ENCODE measurements at regions of chr14 and their contacts with region 1.

Region 1: GRCh38 chr14:105351920-105352851 is 37.6 kb downstream of the PACS2 start:
- DNase-seq: peak; percentile 89
- H3K4me3 ChIP-seq: no peak overlapping the region
- H3K27ac ChIP-seq: no peak overlapping the region
- H3K4me1 ChIP-seq: peaks cover 2% of the 10 kb centered on the region
- H3K27me3 ChIP-seq: no peaks in the 10 kb centered on the region
- CTCF ChIP-seq: peak; percentile 76 to 85
- POLR2A ChIP-seq: no peak

Region 2: GRCh38 chr14:105197271-105197670 is 154.9 kb before region 1 on chr14:
- CTCF ChIA-PET with region 1: interaction called, 15 read pairs
- POLR2A ChIA-PET with region 1: no interaction called
- dilution Hi-C with region 1: no loop called
- intact Hi-C with region 1: no loop called
- DNase-seq: no peak
- H3K4me3 ChIP-seq: no peak overlapping the region
- H3K27ac ChIP-seq: peak overlapping the region; percentile 87
- H3K4me1 ChIP-seq: peaks cover 72% of the 10 kb centered on the region
- H3K27me3 ChIP-seq: no peaks in the 10 kb centered on the region
- CTCF ChIP-seq: no peak
- POLR2A ChIP-seq: no peak

Region 3: DNA sequence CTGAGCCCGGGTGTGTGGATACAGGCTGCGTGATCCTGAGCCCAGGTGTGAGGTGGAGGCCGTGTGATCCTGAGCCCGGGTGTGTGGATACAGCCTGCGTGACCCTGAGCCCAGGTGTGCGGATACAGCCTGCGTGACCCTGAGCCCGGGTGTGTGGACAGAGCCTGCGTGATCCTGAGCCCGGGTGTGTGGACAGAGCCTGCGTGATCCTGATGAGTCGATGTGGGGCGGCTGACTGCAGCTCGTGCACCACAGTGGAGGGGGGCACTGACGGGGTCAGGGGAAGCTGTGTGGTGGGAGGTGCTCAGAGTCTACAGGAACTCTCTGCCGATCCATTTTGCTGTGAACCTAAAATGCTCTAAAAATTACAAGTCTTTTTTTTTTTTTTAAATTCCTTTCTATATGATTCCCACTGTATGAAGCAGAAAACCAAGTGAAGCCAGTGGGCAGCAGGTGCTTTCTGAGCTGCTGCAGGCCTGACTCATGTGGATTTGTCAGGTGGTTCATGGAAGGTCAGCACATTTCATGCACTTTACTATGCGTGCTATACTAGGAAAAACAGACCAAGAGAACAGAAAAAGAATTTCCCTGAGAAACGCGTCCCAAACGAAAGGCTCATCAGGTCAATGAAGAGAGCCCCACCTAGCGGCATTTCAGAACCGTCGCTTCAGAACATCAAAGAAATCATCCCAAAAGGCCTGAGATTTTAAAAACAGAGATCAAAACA is 70.7 kb before region 1 on chr14:
- CTCF ChIA-PET with region 1: interaction called, 6 read pairs
- POLR2A ChIA-PET with region 1: no interaction called
- dilution Hi-C with region 1: no loop called
- intact Hi-C with region 1: loop called (anchors 1 kb)
- DNase-seq: peak; percentile 61
- H3K4me3 ChIP-seq: no peak overlapping the region
- H3K27ac ChIP-seq: no peak overlapping the region
- H3K4me1 ChIP-seq: peaks cover 11% of the 10 kb centered on the region
- H3K27me3 ChIP-seq: no peaks in the 10 kb centered on the region
- CTCF ChIP-seq: peak; percentile 63 to 67
- POLR2A ChIP-seq: no peak

Region 4: GRCh38 chr14:105300792-105301533 is 51.2 kb before region 1 on chr14 and contains the start of gene BRF1:
- CTCF ChIA-PET with region 1: interaction called, 22 read pairs
- POLR2A ChIA-PET with region 1: no interaction called
- dilution Hi-C with region 1: no loop called
- intact Hi-C with region 1: loop called (anchors 2 kb)
- DNase-seq: peak; percentile 95
- H3K4me3 ChIP-seq: peak within 1 kb of the TSS; percentile 25 to 79 (median 54)
- H3K27ac ChIP-seq: peak within 1 kb of the TSS; percentile 62
- H3K4me1 ChIP-seq: peaks cover 9% of the 10 kb centered on the region
- H3K27me3 ChIP-seq: no peaks in the 10 kb centered on the region
- CTCF ChIP-seq: no peak
- POLR2A ChIP-seq: peak; percentile 39
- total RNA-seq, gene BRF1: 37.9 and 47.2 TPM in 2 replicates

Region 5: GRCh38 chr14:105340821-105341733 is 11.1 kb before region 1 on chr14:
- CTCF ChIA-PET with region 1: interaction called, 19 read pairs
- POLR2A ChIA-PET with region 1: no interaction called
- dilution Hi-C with region 1: no loop called
- intact Hi-C with region 1: no loop called
- DNase-seq: peak; percentile 41
- H3K4me3 ChIP-seq: no peak overlapping the region
- H3K27ac ChIP-seq: no peak overlapping the region
- H3K4me1 ChIP-seq: peaks cover 12% of the 10 kb centered on the region
- H3K27me3 ChIP-seq: no peaks in the 10 kb centered on the region
- CTCF ChIP-seq: no peak
- POLR2A ChIP-seq: no peak

Region 6: GRCh38 chr14:106657460-106657859 is 1305.3 kb after region 1 on chr14:
- CTCF ChIA-PET with region 1: no interaction called
- POLR2A ChIA-PET with region 1: no interaction called
- dilution Hi-C with region 1: no loop called
- intact Hi-C with region 1: no loop called
- DNase-seq: no peak
- H3K4me3 ChIP-seq: no peak overlapping the region
- H3K27ac ChIP-seq: no peak overlapping the region
- H3K4me1 ChIP-seq: no peaks in the 10 kb centered on the region
- H3K27me3 ChIP-seq: no peaks in the 10 kb centered on the region
- CTCF ChIP-seq: no peak
- POLR2A ChIP-seq: no peak